ENCODE measurements at regions of chr10 and their contacts with region 1.

Region 1: DNA sequence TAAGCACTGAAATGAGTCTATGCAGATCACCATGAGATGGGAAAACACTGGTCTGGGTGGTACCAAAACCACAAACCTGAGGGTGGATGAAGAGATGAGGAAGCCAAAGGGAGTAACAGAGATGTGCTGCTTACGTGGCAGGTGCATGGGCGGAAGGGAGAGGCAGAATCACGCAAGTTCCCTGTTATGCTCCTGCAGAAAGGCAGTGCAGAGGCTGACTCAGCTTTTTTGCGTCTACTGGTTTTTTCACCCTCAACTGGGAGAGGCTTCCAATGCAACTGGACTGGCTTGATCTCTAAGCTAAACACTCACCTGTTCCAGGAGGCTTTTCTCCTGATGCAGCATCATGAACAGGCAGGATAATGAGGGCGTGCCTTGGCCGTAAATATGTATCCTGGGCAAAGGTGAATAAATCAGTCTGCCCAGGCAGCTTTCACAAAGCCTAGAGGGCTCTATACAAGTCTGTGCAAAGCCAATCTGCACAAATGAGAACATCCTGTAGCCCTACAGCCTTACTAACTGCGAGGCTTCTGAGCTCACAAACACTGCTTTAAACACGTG is 95.4 kb upstream of the AFAP1L2 start:
- DNase-seq: peak; percentile 37
- ATAC-seq: peak; percentile 49
- H3K4me3 Mint-ChIP-seq: peak overlapping the region; percentile 67
- H3K27ac Mint-ChIP-seq: peak overlapping the region; percentile 96
- H3K4me1 Mint-ChIP-seq: peaks cover 83% of the 10 kb centered on the region
- H3K27me3 Mint-ChIP-seq: no peaks in the 10 kb centered on the region
- CTCF ChIP-seq: no peak

Region 2: GRCh38 chr10:113882240-113882639 is 617.5 kb before region 1 on chr10:
- CTCF ChIA-PET with region 1: no interaction called
- POLR2A ChIA-PET with region 1: no interaction called
- intact Hi-C with region 1: no loop called
- DNase-seq: no peak
- ATAC-seq: no peak
- H3K4me3 Mint-ChIP-seq: no peak overlapping the region
- H3K27ac Mint-ChIP-seq: no peak overlapping the region
- H3K4me1 Mint-ChIP-seq: peaks cover 13% of the 10 kb centered on the region
- H3K27me3 Mint-ChIP-seq: no peaks in the 10 kb centered on the region
- CTCF ChIP-seq: no peak

Region 3: DNA sequence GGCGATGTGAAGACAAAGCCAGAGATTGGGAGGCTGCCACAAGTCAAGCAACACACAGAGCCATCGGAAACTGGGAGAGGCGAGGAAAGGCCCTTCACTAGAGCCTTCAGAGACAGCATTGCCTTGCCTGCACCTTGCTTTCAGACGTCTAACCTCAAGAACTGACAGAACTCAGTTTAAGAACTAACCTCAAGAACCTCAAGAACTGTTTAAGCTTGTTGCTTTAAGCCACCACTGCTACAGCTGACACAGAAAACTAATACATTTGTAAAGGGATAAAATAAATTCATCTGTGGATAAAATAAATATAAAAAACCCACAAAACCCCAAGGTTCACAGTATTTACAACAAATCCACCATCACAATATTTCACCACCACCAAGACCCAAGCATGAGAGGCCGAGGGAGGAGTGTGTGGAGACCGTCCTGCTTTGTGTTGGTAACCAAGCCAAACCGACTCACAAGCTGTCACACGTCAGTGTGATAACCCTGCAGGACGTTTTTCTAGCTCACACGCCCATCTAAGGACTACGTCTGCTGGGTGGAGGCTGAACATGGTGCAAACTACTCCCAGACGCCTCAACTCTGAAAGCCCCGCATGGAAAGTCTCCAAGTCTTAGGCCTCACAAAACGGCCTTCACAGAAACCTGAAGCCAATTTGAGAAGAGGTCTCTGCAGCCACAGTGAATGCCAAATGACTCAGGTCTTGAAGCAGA is 41.5 kb after region 1 on chr10:
- CTCF ChIA-PET with region 1: interaction called, 3 read pairs
- POLR2A ChIA-PET with region 1: interaction called, 17 read pairs
- intact Hi-C with region 1: loop called (anchors 1 kb)
- DNase-seq: no peak
- ATAC-seq: no peak
- H3K4me3 Mint-ChIP-seq: no peak overlapping the region
- H3K27ac Mint-ChIP-seq: peak overlapping the region; percentile 64
- H3K4me1 Mint-ChIP-seq: peaks cover 66% of the 10 kb centered on the region
- H3K27me3 Mint-ChIP-seq: no peaks in the 10 kb centered on the region
- CTCF ChIP-seq: no peak

Measured in activated B cell treated with CpG ODN at 0.5 μM for 24 hours (primary cell).